ENCODE measurements at regions of chr3 and their contacts with region 1.

Region 1: DNA sequence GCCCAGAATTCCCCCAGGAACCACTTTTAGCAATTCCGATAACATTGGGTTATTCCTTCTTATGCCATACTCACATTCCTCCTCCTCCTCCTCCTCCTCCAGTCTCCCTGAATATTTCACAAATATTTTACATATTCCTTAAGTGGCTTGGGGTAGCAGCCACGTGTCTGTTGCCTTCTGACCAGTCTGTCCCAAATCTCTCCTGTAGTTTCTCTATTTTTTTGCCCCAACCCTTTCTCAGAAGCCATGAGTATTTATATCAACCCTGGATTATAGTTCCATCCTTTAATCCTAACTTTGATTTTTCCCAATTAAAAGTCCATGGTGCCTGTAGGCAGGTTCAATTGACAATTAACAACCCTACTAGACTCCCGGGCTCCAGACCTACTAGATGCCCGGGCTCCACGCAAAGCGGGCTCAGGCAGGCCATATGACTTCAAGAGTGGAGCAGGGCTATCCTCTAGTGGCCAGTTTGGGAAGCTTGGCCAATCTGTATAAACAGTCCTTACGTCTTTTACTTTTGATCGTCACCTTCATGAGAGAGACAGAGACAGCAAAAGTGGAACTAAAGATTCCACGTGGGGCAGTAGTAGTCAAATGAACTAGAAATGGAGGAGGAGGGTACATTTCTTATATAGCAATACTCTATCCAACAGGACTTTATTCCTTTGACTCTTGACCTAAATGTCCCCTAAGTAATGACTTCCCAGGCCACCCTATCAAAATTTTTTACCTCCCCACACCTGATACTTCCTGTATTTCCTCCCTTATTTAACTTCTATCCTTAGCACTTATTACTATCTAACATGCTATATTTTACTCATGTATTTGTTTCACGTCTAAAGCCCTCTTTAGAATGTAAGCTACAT is 69.7 kb downstream of the USF3 start:
- DNase-seq: no peak
- ATAC-seq: peak; percentile 90
- H3K4me3 Mint-ChIP-seq: peak overlapping the region; percentile 84
- H3K27ac Mint-ChIP-seq: peak overlapping the region; percentile 87
- H3K4me1 Mint-ChIP-seq: peaks cover 57% of the 10 kb centered on the region
- H3K27me3 Mint-ChIP-seq: no peaks in the 10 kb centered on the region
- CTCF ChIP-seq: no peak

Region 2: GRCh38 chr3:113136071-113136470 is 490.7 kb before region 1 on chr3:
- CTCF ChIA-PET with region 1: no interaction called
- POLR2A ChIA-PET with region 1: no interaction called
- intact Hi-C with region 1: loop called (anchors 5 kb)
- DNase-seq: no peak
- ATAC-seq: no peak
- H3K4me3 Mint-ChIP-seq: no peak overlapping the region
- H3K27ac Mint-ChIP-seq: no peak overlapping the region
- H3K4me1 Mint-ChIP-seq: no peaks in the 10 kb centered on the region
- H3K27me3 Mint-ChIP-seq: no peaks in the 10 kb centered on the region
- CTCF ChIP-seq: no peak

Region 3: GRCh38 chr3:113495035-113495434 is 131.7 kb before region 1 on chr3:
- CTCF ChIA-PET with region 1: interaction called, 21 read pairs
- POLR2A ChIA-PET with region 1: interaction called, 3 read pairs
- intact Hi-C with region 1: loop called (anchors 1 kb)
- DNase-seq: no peak
- ATAC-seq: no peak
- H3K4me3 Mint-ChIP-seq: no peak overlapping the region
- H3K27ac Mint-ChIP-seq: no peak overlapping the region
- H3K4me1 Mint-ChIP-seq: no peaks in the 10 kb centered on the region
- H3K27me3 Mint-ChIP-seq: no peaks in the 10 kb centered on the region
- CTCF ChIP-seq: no peak

Region 4: GRCh38 chr3:113575206-113575605 is 51.5 kb before region 1 on chr3:
- CTCF ChIA-PET with region 1: interaction called, 14 read pairs
- POLR2A ChIA-PET with region 1: no interaction called
- intact Hi-C with region 1: loop called (anchors 1 kb)
- DNase-seq: no peak
- ATAC-seq: no peak
- H3K4me3 Mint-ChIP-seq: no peak overlapping the region
- H3K27ac Mint-ChIP-seq: peak overlapping the region; percentile 31
- H3K4me1 Mint-ChIP-seq: peaks cover 5% of the 10 kb centered on the region
- H3K27me3 Mint-ChIP-seq: no peaks in the 10 kb centered on the region
- CTCF ChIP-seq: no peak

Region 5: DNA sequence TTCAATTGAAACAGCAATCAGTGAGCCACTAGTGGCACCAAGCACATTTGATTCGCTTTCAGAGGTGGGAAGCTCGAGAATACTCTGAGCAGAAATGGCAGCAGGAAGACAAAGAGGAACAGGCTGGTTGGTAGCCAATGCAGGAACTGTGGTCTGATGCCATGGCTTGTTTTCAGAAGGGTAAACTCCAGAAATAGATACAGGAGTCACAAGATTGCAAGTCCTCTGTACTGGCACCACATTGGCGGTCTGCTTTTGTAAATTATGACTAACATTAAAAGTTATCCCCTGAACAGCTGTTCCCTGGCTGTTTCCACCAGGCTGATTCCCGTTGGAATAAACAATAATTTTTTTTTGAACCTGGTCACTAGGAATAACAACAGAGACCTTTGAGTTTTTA is 34.2 kb after region 1 on chr3:
- CTCF ChIA-PET with region 1: interaction called, 3 read pairs
- POLR2A ChIA-PET with region 1: interaction called, 3 read pairs
- intact Hi-C with region 1: loop called (anchors 1 kb)
- DNase-seq: no peak
- ATAC-seq: peak; percentile 44
- H3K4me3 Mint-ChIP-seq: peak overlapping the region; percentile 68
- H3K27ac Mint-ChIP-seq: peak overlapping the region; percentile 94
- H3K4me1 Mint-ChIP-seq: peaks cover 84% of the 10 kb centered on the region
- H3K27me3 Mint-ChIP-seq: no peaks in the 10 kb centered on the region
- CTCF ChIP-seq: no peak

Region 6: DNA sequence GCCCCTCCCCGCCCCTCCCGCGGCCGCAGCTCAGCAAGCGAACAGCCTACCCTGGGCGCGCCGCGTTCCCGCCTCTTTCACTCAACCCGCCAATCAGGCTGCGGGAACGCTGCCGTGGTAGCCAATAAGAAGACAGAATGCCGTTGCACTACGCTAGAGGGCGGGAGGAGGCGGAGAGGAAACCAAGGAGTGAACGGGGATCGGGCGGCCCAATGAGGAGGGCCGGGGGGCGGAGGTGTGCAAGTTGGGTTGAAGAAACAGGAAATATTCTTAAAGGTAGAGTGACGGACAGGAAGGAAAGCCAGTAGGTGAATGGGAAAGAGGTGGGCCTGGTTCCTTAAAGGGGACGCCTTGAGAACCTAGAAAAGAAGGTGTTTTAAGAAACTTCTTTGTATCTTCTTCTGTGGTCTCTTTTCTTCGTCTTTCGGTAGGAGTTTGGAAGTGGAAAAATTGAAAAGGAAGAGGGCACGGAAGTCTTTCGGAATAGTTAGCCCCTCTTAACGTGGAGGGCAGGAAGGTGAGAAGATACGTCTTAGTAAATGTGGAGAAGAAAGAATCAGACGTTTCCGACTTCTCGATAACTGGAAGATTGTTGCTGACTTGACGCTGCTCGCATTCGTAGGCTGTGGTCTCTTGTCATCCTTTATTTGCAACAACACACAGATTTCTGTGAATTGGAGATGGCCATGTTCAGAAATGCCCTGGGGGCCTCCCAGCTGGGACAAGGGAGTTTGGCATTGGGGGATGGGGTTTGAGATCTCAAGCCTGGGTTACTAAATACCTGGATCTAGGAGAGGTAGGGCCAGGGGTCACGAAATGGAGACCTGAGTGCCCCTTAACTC is 70.1 kb after region 1 on chr3:
- CTCF ChIA-PET with region 1: interaction called, 4 read pairs
- POLR2A ChIA-PET with region 1: interaction called, 10 read pairs
- intact Hi-C with region 1: loop called (anchors 1 kb)
- DNase-seq: peak; percentile 95
- ATAC-seq: peak; percentile 89
- H3K4me3 Mint-ChIP-seq: no peak overlapping the region
- H3K27ac Mint-ChIP-seq: no peak overlapping the region
- H3K4me1 Mint-ChIP-seq: peaks cover 29% of the 10 kb centered on the region
- H3K27me3 Mint-ChIP-seq: no peaks in the 10 kb centered on the region
- CTCF ChIP-seq: no peak

Region 7: GRCh38 chr3:114464548-114464947 is 837.8 kb after region 1 on chr3:
- CTCF ChIA-PET with region 1: no interaction called
- POLR2A ChIA-PET with region 1: interaction called, 14 read pairs
- intact Hi-C with region 1: no loop called
- DNase-seq: no peak
- ATAC-seq: peak; percentile 97
- H3K4me3 Mint-ChIP-seq: peak overlapping the region; percentile 42
- H3K27ac Mint-ChIP-seq: peak overlapping the region; percentile 85
- H3K4me1 Mint-ChIP-seq: peaks cover 40% of the 10 kb centered on the region
- H3K27me3 Mint-ChIP-seq: no peaks in the 10 kb centered on the region
- CTCF ChIP-seq: no peak